T-cell (primary cell): ENCODE measurements at regions of chr14 and their contacts with region 1.

Region 1: GRCh38 chr14:22822571-22823098 is 7.1 kb upstream of the MRPL52 start:
- DNase-seq: peak in 34 of 35 experiments; percentile 29 to 83 (median 59)
- ATAC-seq: peak; percentile 89 to 93 (median 91)
- H3K4me3 ChIP-seq: peak overlapping the region; percentile 24 to 25
- H3K4me3 Mint-ChIP-seq: peak overlapping the region; percentile 41 to 54 (median 50)
- H3K27ac ChIP-seq: no peak overlapping the region
- H3K27ac Mint-ChIP-seq: no peak overlapping the region
- H3K4me1 ChIP-seq: peaks cover 7 to 21% of the 10 kb centered on the region in 2 experiments
- H3K4me1 Mint-ChIP-seq: peaks cover 15 to 22% (median 17%) of the 10 kb centered on the region in 3 donors
- H3K27me3 ChIP-seq: peaks cover 0 to 55% of the 10 kb centered on the region in 2 experiments
- H3K27me3 Mint-ChIP-seq: peaks cover 6 to 13% of the 10 kb centered on the region in 2 donors

Region 2: DNA sequence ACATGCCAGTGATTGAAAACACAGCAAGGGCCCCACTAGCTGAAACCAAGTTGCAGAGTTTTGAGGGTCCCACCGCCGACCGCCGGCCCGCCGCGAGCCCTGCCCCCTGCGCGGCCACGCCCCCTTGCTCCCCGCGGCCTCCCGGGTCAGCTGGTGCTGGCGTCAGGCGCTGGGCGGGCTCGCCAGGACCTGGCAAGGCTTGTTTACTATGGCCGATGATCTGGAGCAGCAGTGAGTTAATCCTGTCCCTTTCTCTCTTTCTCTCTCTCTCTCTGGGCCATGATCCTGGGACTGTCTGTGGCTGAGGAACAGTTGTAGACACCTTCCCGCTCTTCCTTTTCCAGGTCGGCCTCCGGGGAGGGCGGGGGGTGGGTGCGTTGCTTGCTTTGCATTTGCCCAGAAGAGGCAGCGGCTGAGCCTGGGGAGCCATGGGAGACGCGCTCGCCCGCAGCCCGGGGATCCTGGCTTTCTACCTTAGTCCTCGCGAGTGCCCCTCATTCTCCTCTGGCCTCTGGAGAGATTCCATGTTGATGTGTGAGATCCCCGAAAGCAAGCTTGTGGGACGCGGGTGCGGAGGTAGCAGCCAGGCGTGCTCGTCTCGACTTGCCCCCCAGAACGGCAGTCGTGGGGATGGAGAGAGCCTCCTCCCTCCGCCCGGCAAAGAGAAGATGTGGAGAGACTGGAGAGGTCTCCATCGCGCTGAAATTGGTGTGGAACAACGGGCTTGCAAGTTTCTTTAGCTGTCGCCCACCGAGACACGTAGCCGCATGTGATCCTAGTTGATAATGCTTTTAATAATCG is 224.3 kb before region 1 on chr14 and contains the start of gene ABHD4:
- CTCF ChIA-PET with region 1: interaction called, 3 to 10 read pairs
- POLR2A ChIA-PET with region 1: no interaction called
- DNase-seq: peak in 30 of 35 experiments; percentile 12 to 71 (median 37)
- ATAC-seq: peak; percentile 83 to 90 (median 89)
- H3K4me3 ChIP-seq: peak within 1 kb of the TSS; percentile 72 to 85
- H3K4me3 Mint-ChIP-seq: peak within 1 kb of the TSS; percentile 96 to 99 (median 97)
- H3K27ac ChIP-seq: peak within 1 kb of the TSS; percentile 17
- H3K27ac Mint-ChIP-seq: peak within 1 kb of the TSS; percentile 80 to 93
- H3K4me1 ChIP-seq: peaks cover 3 to 17% of the 10 kb centered on the region in 2 experiments
- H3K4me1 Mint-ChIP-seq: peaks cover 32 to 38% (median 37%) of the 10 kb centered on the region in 3 donors
- H3K27me3 ChIP-seq: peaks cover 0 to 5% of the 10 kb centered on the region in 2 experiments
- H3K27me3 Mint-ChIP-seq: peaks cover 0 to 3% of the 10 kb centered on the region in 2 donors
- total RNA-seq, gene ABHD4: 10.1 to 20.9 (median 17.3) TPM

Region 3: DNA sequence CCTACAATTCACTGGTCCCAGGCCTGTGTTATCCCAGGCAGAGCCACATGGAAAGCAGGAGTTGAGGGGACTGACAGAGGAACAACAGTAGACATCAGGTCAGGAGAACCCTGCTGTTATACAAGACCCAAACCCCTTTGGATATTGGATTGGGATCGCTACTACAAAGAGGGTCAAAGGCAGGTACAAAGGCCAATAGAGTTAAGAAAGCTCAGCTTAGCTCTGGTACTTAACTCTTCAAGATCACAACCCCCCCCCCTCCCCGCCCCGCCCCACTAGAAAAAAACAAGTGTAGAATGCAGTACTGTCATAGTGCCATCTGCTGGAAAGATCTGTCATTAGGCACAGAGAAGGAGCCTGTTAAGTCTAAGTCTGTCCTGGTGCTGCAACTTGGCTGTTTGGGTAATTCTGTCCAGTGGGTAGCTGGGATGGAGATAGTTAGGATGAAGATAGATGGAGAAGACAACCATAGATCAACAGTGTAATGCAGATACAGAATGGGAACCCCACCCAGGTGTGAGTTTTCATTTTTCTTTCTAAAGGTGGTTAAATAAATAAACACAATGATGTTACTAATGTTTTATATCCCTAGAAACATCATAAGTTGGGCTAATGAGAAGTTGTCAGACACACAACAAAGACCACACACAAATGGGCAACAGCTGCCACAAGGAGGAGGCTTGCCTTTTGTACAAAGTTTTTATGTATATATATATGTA is 77.6 kb after region 1 on chr14:
- CTCF ChIA-PET with region 1: interaction called, 8 to 23 read pairs
- POLR2A ChIA-PET with region 1: no interaction called
- DNase-seq: peak in 26 of 35 experiments; percentile 17 to 85 (median 39)
- ATAC-seq: peak; percentile 73 to 81 (median 80)
- H3K4me3 ChIP-seq: no peak overlapping the region
- H3K4me3 Mint-ChIP-seq: no peak overlapping the region
- H3K27ac ChIP-seq: no peak overlapping the region
- H3K27ac Mint-ChIP-seq: peak overlapping the region in 1 of 2 donors; percentile 41
- H3K4me1 ChIP-seq: peaks cover 2 to 10% of the 10 kb centered on the region in 2 experiments
- H3K4me1 Mint-ChIP-seq: peaks cover 8 to 11% (median 9%) of the 10 kb centered on the region in 3 donors
- H3K27me3 ChIP-seq: no peaks in the 10 kb centered on the region
- H3K27me3 Mint-ChIP-seq: no peaks in the 10 kb centered on the region

Region 4: GRCh38 chr14:23327947-23328744 is 505.5 kb after region 1 on chr14:
- CTCF ChIA-PET with region 1: no interaction called
- POLR2A ChIA-PET with region 1: no interaction called
- DNase-seq: peak in 31 of 35 experiments; percentile 16 to 84 (median 47)
- ATAC-seq: peak; percentile 61 to 81 (median 74)
- H3K4me3 ChIP-seq: no peak overlapping the region
- H3K4me3 Mint-ChIP-seq: no peak overlapping the region
- H3K27ac ChIP-seq: no peak overlapping the region
- H3K27ac Mint-ChIP-seq: no peak overlapping the region
- H3K4me1 ChIP-seq: peaks cover 0 to 2% of the 10 kb centered on the region in 2 experiments
- H3K4me1 Mint-ChIP-seq: peaks cover 2 to 6% (median 6%) of the 10 kb centered on the region in 3 donors
- H3K27me3 ChIP-seq: peaks cover 0 to 6% of the 10 kb centered on the region in 2 experiments
- H3K27me3 Mint-ChIP-seq: no peaks in the 10 kb centered on the region